Activated T-helper 1 cell treated with anti-CD3 and anti-CD28 coated beads, Interleukin-12 subunit alpha, Interleukin-12 subunit beta, Interleukin-2, Interleukin-4 antibody, amounts not matched to agents 30 ng/mL and 10 ng/mL and 1 ng/mL, durations not matched to agents 14 hours and 24 hours and 36 hours (primary cell): ENCODE measurements at regions of chr16 and their contacts with region 1.

Region 1: GRCh38 chr16:17304491-17305119 is 166.2 kb downstream of the XYLT1 start:
- DNase-seq: no peak
- H3K4me3 Mint-ChIP-seq: no peak overlapping the region
- H3K27ac Mint-ChIP-seq: no peak overlapping the region
- H3K4me1 Mint-ChIP-seq: peaks cover 46% of the 10 kb centered on the region
- H3K27me3 Mint-ChIP-seq: peaks cover 2% of the 10 kb centered on the region

Region 2: GRCh38 chr16:17369421-17370222 is 65.0 kb after region 1 on chr16:
- intact Hi-C with region 1: loop called (anchors 5 kb)
- DNase-seq: peak; percentile 72
- H3K4me3 Mint-ChIP-seq: peak overlapping the region; percentile 83
- H3K27ac Mint-ChIP-seq: peak overlapping the region; percentile 93
- H3K4me1 Mint-ChIP-seq: peaks cover 88% of the 10 kb centered on the region
- H3K27me3 Mint-ChIP-seq: no peaks in the 10 kb centered on the region